ENCODE measurements at regions of chr21 and their contacts with region 1.

Region 1: DNA sequence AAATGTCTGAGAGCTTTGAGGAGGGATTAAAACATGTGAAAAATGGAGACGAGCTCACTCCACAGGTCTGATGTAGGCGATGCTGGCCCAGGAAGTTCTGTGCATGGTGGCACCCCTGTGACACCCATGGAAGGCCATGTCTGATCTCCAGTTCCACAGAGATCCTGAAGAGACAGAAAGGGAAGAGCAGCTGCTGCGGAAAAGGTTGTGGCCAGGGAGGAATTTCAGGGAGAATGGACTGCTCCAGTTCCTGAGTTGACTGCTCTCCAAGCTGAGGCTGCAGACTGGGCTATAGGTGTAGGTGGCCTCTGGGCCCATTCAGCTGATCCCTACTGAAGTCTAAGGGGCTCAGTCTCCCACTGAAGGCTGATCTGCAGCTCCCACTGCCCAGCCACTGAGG is 89.1 kb downstream of the ETS2 start:
- DNase-seq: no peak
- ATAC-seq: no peak
- H3K4me3 Mint-ChIP-seq: no peak overlapping the region
- H3K27ac Mint-ChIP-seq: no peak overlapping the region
- H3K4me1 Mint-ChIP-seq: peaks cover 2% of the 10 kb centered on the region
- H3K27me3 Mint-ChIP-seq: peaks cover 26% of the 10 kb centered on the region
- CTCF ChIP-seq: no peak

Region 2: GRCh38 chr21:38979228-38980121 is 84.6 kb after region 1 on chr21:
- CTCF ChIA-PET with region 1: no interaction called
- POLR2A ChIA-PET with region 1: no interaction called
- intact Hi-C with region 1: loop called (anchors 5 kb)
- DNase-seq: peak; percentile 68
- ATAC-seq: peak; percentile 90
- H3K4me3 Mint-ChIP-seq: no peak overlapping the region
- H3K27ac Mint-ChIP-seq: peak overlapping the region; percentile 27
- H3K4me1 Mint-ChIP-seq: peaks cover 22% of the 10 kb centered on the region
- H3K27me3 Mint-ChIP-seq: peaks cover 34% of the 10 kb centered on the region
- CTCF ChIP-seq: no peak

Measured in activated CD8-positive, alpha-beta T cell treated with anti-CD3 and anti-CD28 coated beads for 36 hours (primary cell).